Uterus (tissue), 4 donors: ENCODE measurements at regions of chr13 and their contacts with region 1.

Region 1: GRCh38 chr13:110220471-110220870 is 86.5 kb downstream of the COL4A1 start:
- DNase-seq: no peak
- H3K4me3 ChIP-seq: no peak overlapping the region
- H3K27ac ChIP-seq: peak overlapping the region; percentile 82 to 94
- H3K4me1 ChIP-seq: peaks cover 7 to 10% of the 10 kb centered on the region in 2 donors
- H3K27me3 ChIP-seq: no peaks in the 10 kb centered on the region
- CTCF ChIP-seq: no peak
- POLR2A ChIP-seq: no peak

Region 2: GRCh38 chr13:110347535-110348308 is 127.3 kb after region 1 on chr13:
- intact Hi-C with region 1: no loop called
- DNase-seq: peak; percentile 53 to 72
- H3K4me3 ChIP-seq: no peak overlapping the region
- H3K27ac ChIP-seq: peak overlapping the region; percentile 74 to 96
- H3K4me1 ChIP-seq: no peaks in the 10 kb centered on the region
- H3K27me3 ChIP-seq: no peaks in the 10 kb centered on the region
- CTCF ChIP-seq: no peak
- POLR2A ChIP-seq: no peak

Region 3: GRCh38 chr13:110433014-110433413 is 212.5 kb after region 1 on chr13:
- intact Hi-C with region 1: no loop called
- DNase-seq: no peak
- H3K4me3 ChIP-seq: no peak overlapping the region
- H3K27ac ChIP-seq: peak overlapping the region; percentile 58 to 61
- H3K4me1 ChIP-seq: no peaks in the 10 kb centered on the region
- H3K27me3 ChIP-seq: no peaks in the 10 kb centered on the region
- CTCF ChIP-seq: no peak
- POLR2A ChIP-seq: no peak

Region 4: DNA sequence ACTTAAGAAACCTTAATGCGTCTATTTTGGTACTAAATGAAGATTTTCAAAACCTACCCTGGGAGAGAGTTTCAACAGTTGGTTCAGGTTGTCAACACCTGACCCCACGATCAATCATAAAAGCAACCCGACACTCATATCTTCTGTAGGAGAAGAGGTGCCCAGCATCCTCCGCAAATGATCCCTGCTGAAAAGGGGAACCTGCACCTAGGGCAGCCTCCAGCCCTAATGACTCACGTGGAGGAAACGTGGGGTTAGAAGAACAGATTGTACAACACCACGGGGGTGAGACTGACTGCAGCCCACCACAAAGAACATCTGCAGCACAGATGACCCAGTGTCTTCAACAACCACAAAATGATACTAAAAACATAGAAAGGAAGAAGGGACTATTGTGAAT is 224.7 kb after region 1 on chr13:
- intact Hi-C with region 1: loop called (anchors 5 kb)
- DNase-seq: no peak
- H3K4me3 ChIP-seq: no peak overlapping the region
- H3K27ac ChIP-seq: no peak overlapping the region
- H3K4me1 ChIP-seq: no peaks in the 10 kb centered on the region
- H3K27me3 ChIP-seq: no peaks in the 10 kb centered on the region
- CTCF ChIP-seq: no peak
- POLR2A ChIP-seq: no peak